MCF 10A (cell line): ENCODE measurements at regions of chr12 and their contacts with region 1.

Region 1: DNA sequence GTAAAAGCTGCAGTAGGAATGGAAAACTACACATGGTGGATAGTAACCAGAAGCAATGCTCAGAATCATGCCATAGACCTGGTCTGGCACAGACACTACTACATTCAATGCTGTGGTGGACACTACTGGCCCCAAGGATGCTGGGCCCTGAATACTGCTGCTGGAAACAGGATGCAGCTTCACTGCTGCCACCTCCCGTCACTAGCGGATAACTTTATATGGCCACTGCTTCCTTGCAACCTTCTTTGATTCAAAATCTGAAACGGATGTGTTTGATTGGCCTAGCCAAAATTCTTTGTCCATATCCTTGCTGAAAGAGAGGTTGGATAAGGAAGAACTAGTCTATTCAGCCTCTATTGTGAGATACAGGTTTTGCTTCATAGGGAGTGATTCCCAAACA is 30.7 kb downstream of the ADCY6 start:
- DNase-seq: no peak
- H3K4me3 Mint-ChIP-seq: no peak overlapping the region
- H3K27ac Mint-ChIP-seq: no peak overlapping the region
- H3K4me1 Mint-ChIP-seq: no peaks in the 10 kb centered on the region
- H3K27me3 Mint-ChIP-seq: no peaks in the 10 kb centered on the region
- CTCF ChIP-seq: no peak

Region 2: DNA sequence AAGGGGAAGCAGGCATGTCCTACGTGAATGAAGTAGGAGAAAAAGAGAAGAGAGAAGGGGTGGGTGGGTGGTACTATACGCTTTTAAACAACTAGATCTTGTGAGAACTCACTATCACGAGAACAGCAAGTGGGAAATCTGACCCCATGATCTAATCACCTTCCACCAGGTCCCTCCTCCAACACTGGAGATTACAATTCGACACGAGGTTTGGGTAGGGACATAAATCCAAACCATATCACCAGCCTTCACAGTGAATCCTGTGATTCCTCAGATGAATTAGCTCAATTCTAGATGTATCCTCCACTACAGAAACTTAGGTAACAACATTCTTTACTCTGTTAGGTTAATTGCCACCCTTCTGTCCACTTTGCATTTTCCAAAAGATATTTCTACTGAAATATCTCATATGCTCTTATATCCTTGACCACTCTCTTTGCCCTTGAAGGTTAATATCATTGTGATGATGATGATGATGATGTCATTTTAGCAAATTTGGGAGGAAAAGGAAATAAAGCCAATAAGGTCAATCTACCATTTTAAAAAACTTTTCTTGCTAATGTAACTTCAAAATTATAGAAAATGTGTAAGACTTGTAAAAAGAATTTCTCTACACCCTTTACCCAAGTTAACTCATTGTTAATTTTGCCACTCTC is 18.5 kb before region 1 on chr12:
- CTCF ChIA-PET with region 1: interaction called, 14 read pairs
- POLR2A ChIA-PET with region 1: interaction called, 3 read pairs
- intact Hi-C with region 1: no loop called
- DNase-seq: no peak
- H3K4me3 Mint-ChIP-seq: no peak overlapping the region
- H3K27ac Mint-ChIP-seq: no peak overlapping the region
- H3K4me1 Mint-ChIP-seq: no peaks in the 10 kb centered on the region
- H3K27me3 Mint-ChIP-seq: peaks cover 25% of the 10 kb centered on the region
- CTCF ChIP-seq: no peak

Region 3: DNA sequence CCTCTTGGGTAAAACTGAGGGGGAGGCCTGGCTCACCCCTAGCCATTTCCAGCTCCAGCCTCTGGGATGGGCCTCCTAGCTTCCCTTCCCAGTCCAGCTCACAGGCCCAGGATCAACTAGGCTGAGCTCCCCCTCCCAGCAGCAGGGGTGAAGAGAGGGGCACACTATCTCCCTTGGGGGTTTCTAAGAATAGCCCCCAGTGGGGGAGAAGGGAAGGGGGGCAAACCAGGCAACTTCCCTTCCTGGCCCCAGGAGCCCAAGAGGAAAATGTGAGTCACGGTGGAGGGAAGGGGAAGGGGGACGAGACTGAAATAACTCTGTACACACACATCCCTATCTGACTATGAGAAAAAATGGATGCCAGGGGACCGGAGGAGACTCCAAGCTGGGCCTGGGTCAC is 21.6 kb after region 1 on chr12:
- CTCF ChIA-PET with region 1: interaction called, 14 read pairs
- POLR2A ChIA-PET with region 1: no interaction called
- intact Hi-C with region 1: no loop called
- DNase-seq: no peak
- H3K4me3 Mint-ChIP-seq: no peak overlapping the region
- H3K27ac Mint-ChIP-seq: no peak overlapping the region
- H3K4me1 Mint-ChIP-seq: peaks cover 7% of the 10 kb centered on the region
- H3K27me3 Mint-ChIP-seq: no peaks in the 10 kb centered on the region
- CTCF ChIP-seq: no peak

Region 4: GRCh38 chr12:48814262-48815125 is 56.3 kb after region 1 on chr12:
- CTCF ChIA-PET with region 1: interaction called, 16 read pairs
- POLR2A ChIA-PET with region 1: interaction called, 3 read pairs
- intact Hi-C with region 1: no loop called
- DNase-seq: peak; percentile 77
- H3K4me3 Mint-ChIP-seq: peak overlapping the region; percentile 85
- H3K27ac Mint-ChIP-seq: peak overlapping the region; percentile 75
- H3K4me1 Mint-ChIP-seq: peaks cover 24% of the 10 kb centered on the region
- H3K27me3 Mint-ChIP-seq: no peaks in the 10 kb centered on the region
- CTCF ChIP-seq: peak; percentile 97

Region 5: DNA sequence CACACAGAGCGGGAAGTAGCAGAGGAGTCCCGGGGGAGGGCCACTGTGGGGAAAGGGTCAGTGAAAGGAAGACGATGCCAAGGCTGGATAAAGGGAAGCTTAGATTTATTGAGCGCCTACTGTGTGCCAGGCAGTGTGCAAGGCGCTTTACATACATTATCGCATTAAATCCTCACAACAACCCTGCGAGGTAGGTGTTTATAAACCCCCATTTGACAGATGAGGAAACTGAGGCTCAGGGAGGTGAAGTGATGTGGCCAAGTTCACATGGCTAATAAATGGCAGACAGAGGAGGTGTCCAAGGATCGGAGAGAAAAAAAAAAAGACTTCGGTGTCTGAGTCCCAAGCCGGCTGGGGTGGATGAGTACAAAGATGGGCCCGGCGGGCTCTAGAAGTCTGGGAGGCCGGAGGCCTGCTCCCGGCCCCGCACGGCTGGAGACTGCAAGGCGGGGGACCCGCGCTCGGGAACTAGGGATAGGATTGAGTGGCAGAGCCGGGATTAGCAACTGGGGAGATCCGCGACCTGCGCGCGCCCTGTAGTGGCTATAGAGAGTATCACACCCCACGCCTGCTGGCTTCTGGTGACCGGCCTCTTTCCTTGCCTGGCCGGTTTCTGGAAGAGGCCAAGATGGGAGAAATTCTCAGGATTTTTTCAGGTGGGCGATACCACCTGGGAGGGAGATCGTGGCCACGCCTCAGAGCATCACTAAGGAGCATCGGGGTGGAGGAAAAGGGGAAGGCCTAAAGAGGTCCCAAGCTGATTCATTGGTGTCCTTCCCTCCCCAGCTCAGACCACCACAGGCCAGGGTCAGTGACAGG is 237.0 kb after region 1 on chr12:
- CTCF ChIA-PET with region 1: no interaction called
- POLR2A ChIA-PET with region 1: no interaction called
- intact Hi-C with region 1: no loop called
- DNase-seq: peak; percentile 80
- H3K4me3 Mint-ChIP-seq: peak overlapping the region; percentile 71
- H3K27ac Mint-ChIP-seq: no peak overlapping the region
- H3K4me1 Mint-ChIP-seq: peaks cover 10% of the 10 kb centered on the region
- H3K27me3 Mint-ChIP-seq: peaks cover 3% of the 10 kb centered on the region
- CTCF ChIP-seq: peak; percentile 85